ENCODE measurements at regions of chr7 and their contacts with region 1.

Region 1: GRCh38 chr7:142782922-142783900 is 12.4 kb downstream of the PRSS2 start:
- H3K4me3 ChIP-seq: peak overlapping the region; percentile 17
- H3K27ac ChIP-seq: no peak overlapping the region
- H3K4me1 ChIP-seq: no peaks in the 10 kb centered on the region
- CTCF ChIP-seq: peak; percentile 82

Region 2: GRCh38 chr7:142587578-142588191 is 195.5 kb before region 1 on chr7:
- CTCF ChIA-PET with region 1: interaction called, 16 read pairs
- POLR2A ChIA-PET with region 1: no interaction called
- H3K4me3 ChIP-seq: no peak overlapping the region
- H3K27ac ChIP-seq: no peak overlapping the region
- H3K4me1 ChIP-seq: no peaks in the 10 kb centered on the region
- CTCF ChIP-seq: peak; percentile 47; the same call in 1 of the 2 replicates

Region 3: GRCh38 chr7:142626420-142627035 is 156.7 kb before region 1 on chr7:
- CTCF ChIA-PET with region 1: interaction called, 116 read pairs
- POLR2A ChIA-PET with region 1: no interaction called
- H3K4me3 ChIP-seq: no peak overlapping the region
- H3K27ac ChIP-seq: no peak overlapping the region
- H3K4me1 ChIP-seq: no peaks in the 10 kb centered on the region
- CTCF ChIP-seq: no peak

Region 4: DNA sequence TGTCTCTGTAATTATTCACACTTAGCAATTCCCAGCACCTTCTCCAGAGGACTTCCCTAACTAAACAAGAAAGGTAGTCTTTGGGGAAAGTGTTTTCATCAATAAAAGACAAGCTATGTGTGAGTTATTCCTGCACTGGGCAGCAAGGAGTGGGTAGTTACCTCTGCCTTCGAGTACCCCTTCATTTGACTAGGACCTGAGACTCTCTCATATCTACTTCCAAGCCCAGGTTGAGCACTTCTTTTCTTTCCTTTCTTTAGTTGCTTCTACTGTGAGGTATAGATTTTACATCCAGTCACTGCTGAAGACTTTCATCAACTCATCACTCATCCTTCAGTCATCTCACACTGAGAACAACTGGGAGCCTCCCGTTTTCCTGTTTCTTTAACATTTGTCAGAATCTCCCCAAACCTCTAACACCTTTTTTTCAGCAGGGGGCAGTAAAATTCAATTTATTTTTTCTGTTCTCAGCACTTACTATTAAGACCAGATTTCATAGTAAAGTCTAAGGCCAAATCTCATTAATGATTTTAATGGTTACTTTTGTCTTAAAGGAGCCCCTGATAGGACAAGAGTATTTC is 114.0 kb before region 1 on chr7:
- CTCF ChIA-PET with region 1: interaction called, 21 read pairs
- POLR2A ChIA-PET with region 1: interaction called, 5 read pairs
- H3K4me3 ChIP-seq: no peak overlapping the region
- H3K27ac ChIP-seq: no peak overlapping the region
- H3K4me1 ChIP-seq: no peaks in the 10 kb centered on the region
- CTCF ChIP-seq: no peak

Region 5: GRCh38 chr7:142711746-142712619 is 71.2 kb before region 1 on chr7:
- CTCF ChIA-PET with region 1: interaction called, 66 read pairs
- POLR2A ChIA-PET with region 1: no interaction called
- H3K4me3 ChIP-seq: no peak overlapping the region
- H3K27ac ChIP-seq: no peak overlapping the region
- H3K4me1 ChIP-seq: no peaks in the 10 kb centered on the region
- CTCF ChIP-seq: no peak

Region 6: DNA sequence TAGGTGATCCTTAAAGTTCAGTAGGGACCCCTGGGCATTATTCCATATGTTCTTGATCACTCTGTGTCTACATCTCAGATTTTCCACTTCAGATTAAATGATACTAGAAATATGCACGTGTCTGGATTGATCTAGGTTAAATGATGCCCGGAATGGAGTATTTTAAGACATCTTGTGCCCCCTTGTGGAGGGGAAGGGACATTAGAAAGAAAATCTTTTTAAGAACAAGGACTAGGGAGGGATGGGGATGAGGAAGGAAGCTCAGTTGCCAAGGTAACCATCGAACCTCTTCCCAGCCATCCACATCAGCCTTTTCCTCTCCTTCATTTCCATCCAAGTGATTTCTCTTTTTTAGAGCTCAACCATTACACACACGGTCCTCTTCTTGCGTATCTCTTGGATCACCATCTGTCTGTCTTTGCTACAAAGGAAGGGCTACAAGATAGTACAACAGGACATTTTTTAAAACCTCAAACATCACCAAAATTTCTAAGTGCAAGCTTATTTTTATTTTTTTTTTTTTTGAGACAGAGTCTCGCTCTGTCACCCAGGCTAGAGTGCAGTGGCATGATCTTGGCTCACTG is 28.0 kb after region 1 on chr7:
- CTCF ChIA-PET with region 1: interaction called, 43 read pairs
- POLR2A ChIA-PET with region 1: no interaction called
- H3K4me3 ChIP-seq: no peak overlapping the region
- H3K27ac ChIP-seq: no peak overlapping the region
- H3K4me1 ChIP-seq: no peaks in the 10 kb centered on the region
- CTCF ChIP-seq: no peak; the same call in 1 of the 2 replicates

Measured in HEK293 (cell line).